PC-9 (cell line): ENCODE measurements at regions of chr1 and their contacts with region 1.

Region 1: DNA sequence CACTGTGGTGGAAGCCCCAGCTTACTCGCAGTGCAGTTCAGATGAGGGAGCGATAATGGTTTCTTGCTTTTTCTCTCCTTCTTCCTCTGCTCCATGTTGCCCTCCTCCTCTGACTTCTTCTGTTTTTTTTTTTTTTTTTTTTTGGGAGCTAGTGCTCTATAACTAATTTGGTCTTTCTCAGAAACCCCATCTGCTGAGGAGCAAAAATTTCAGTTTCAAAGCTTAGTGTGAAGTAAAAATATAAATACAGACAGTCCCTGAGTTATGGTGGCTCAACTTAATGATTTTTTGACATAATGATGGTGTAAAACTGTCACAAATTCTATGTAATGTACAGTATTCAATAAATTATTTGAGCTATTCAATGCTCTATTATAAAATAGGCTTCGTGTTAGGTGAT is 120.7 kb downstream of the TBX19 start:
- DNase-seq: no peak
- H3K4me3 ChIP-seq: no peak overlapping the region
- H3K27ac ChIP-seq: no peak overlapping the region
- H3K4me1 ChIP-seq: peaks cover 13% of the 10 kb centered on the region; the same call in 1 of the 2 replicates
- H3K27me3 ChIP-seq: no peaks in the 10 kb centered on the region
- CTCF ChIP-seq: no peak

Region 2: DNA sequence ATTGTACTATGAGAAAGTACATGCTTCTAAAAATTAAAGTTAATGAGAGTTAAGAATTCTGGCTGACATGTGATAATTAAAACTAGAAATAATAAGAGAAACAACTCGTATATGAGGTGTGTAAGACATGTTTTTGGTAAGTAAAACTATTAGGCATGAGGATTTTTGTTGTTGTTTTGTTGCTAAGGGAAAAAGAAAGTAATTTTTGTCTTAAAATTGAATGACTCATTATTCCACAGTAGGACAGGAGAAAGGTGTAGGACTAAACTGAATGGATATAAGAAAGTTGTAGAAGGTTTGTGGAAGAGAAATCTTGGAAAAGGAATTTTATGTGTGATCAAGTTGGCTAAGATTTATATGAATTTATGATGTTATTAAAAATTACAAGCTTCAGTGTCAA is 65.8 kb before region 1 on chr1:
- CTCF ChIA-PET with region 1: no interaction called
- POLR2A ChIA-PET with region 1: no interaction called
- intact Hi-C with region 1: no loop called
- DNase-seq: no peak
- H3K4me3 ChIP-seq: no peak overlapping the region
- H3K27ac ChIP-seq: no peak overlapping the region
- H3K4me1 ChIP-seq: no peaks in the 10 kb centered on the region
- H3K27me3 ChIP-seq: no peaks in the 10 kb centered on the region
- CTCF ChIP-seq: no peak

Region 3: DNA sequence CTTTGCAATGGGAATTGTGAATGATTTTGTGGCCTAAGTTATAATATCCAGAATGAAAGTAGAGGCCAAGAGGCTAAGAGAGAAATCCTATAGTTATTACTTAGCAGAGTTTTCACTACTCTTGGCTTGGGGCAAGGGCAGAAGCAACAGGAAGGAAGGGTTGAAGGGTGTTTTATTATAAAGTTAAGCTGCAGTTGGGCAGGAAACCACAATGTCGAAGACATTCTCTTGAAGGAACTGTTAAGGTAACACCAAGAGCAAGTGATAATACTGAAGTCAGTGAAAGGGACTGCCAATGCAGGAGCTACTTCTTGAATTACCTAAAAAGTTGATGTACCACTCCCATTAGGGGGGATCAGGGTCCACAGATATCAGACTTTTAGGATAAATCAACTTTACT is 134.2 kb after region 1 on chr1:
- CTCF ChIA-PET with region 1: no interaction called
- POLR2A ChIA-PET with region 1: interaction called, 32 read pairs
- intact Hi-C with region 1: no loop called
- DNase-seq: no peak
- H3K4me3 ChIP-seq: no peak overlapping the region
- H3K27ac ChIP-seq: no peak overlapping the region
- H3K4me1 ChIP-seq: no peaks in the 10 kb centered on the region
- H3K27me3 ChIP-seq: no peaks in the 10 kb centered on the region
- CTCF ChIP-seq: no peak